ENCODE measurements at regions of chr7 and their contacts with region 1.

Region 1: GRCh38 chr7:21253740-21254687 is 173.9 kb upstream of the SP4 start:
- DNase-seq: peak in 3 of 5 donors; percentile 9 to 34 (median 23)
- ATAC-seq: peak in 2 of 4 donors; percentile 56 to 71
- H3K4me3 ChIP-seq: no peak overlapping the region
- H3K27ac ChIP-seq: no peak overlapping the region
- H3K4me1 ChIP-seq: peaks cover 0 to 3% (median 0%) of the 10 kb centered on the region in 12 donors
- H3K27me3 ChIP-seq: peaks cover 5 to 80% (median 31%) of the 10 kb centered on the region in 9 donors
- CTCF ChIP-seq: peak in 11 of 12 donors; percentile 27 to 62 (median 43)
- POLR2A ChIP-seq: no peak

Region 2: GRCh38 chr7:20778063-20778721 is 475.8 kb before region 1 on chr7:
- intact Hi-C with region 1: loop called in 7 of 10 experiments (anchors 2 to 10 kb)
- DNase-seq: no peak
- ATAC-seq: peak in 3 of 4 donors; percentile 85 to 95 (median 92)
- H3K4me3 ChIP-seq: peak overlapping the region in 9 of 12 donors; percentile 9 to 43 (median 34)
- H3K27ac ChIP-seq: no peak overlapping the region
- H3K4me1 ChIP-seq: peaks cover 0 to 11% (median 5%) of the 10 kb centered on the region in 12 donors
- H3K27me3 ChIP-seq: peaks cover 38 to 100% (median 95%) of the 10 kb centered on the region in 9 donors
- CTCF ChIP-seq: peak in 11 of 12 donors; percentile 31 to 66 (median 44)
- POLR2A ChIP-seq: no peak

Region 3: DNA sequence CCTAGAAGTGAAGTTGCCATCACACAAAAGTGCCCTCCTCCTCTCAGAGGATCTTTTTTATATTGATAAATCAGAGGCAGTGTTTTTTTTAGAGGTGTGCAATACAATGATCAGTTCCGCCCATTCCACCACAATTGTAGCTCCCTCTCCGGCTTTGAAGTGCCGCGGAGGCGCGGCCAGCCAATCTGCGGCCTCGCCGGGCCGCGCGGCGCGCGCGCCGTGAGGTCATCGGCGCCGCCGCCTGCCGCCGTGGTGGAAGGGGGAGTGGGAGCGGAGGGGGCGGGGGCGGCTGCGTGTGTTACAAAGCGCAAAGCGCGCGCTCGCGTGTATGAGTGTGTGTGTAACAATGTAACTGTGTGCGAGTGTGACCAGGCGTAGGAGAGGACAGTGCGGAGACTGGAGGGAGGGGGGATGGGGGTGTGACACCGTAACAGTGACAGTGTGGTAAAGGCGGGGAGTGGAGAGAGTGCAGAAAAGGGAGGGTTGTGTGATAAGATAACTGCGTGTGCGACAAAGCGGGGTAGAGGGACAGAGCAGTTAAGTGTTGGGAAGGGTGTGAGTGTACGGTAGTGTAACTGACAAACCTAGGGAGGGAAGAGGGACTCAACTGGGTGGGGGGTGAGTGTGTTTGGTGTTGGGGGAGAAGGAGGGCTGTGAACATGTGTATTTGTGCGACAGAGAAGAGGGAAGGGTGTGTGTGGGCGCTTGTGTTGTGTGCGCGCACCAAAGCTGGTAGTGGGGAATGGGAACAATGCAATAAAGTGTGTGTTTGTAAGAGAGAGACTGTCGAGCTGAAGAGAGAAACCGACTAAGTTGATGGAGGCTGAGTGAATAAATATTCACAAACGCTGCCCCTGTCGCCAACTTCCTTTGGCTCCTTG is 467.0 kb before region 1 on chr7 and contains the start of gene SP8:
- intact Hi-C with region 1: loop called in 1 of 10 experiments (anchors 10 kb)
- DNase-seq: no peak
- ATAC-seq: peak in 1 of 4 donors; percentile 34
- H3K4me3 ChIP-seq: peak within 1 kb of the TSS in 11 of 12 donors; percentile 5 to 45 (median 29)
- H3K27ac ChIP-seq: no peak within 1 kb of the TSS
- H3K4me1 ChIP-seq: peaks cover 0 to 48% (median 18%) of the 10 kb centered on the region in 12 donors
- H3K27me3 ChIP-seq: peaks cover 61 to 100% (median 95%) of the 10 kb centered on the region in 9 donors
- CTCF ChIP-seq: no peak
- POLR2A ChIP-seq: no peak
- total RNA-seq, gene SP8: not detected

Region 4: GRCh38 chr7:21160401-21160800 is 93.6 kb before region 1 on chr7:
- intact Hi-C with region 1: no loop called
- DNase-seq: no peak
- ATAC-seq: no peak
- H3K4me3 ChIP-seq: no peak overlapping the region
- H3K27ac ChIP-seq: no peak overlapping the region
- H3K4me1 ChIP-seq: no peaks in the 10 kb centered on the region
- H3K27me3 ChIP-seq: peaks cover 0 to 6% (median 0%) of the 10 kb centered on the region in 9 donors
- CTCF ChIP-seq: no peak
- POLR2A ChIP-seq: no peak

Region 5: DNA sequence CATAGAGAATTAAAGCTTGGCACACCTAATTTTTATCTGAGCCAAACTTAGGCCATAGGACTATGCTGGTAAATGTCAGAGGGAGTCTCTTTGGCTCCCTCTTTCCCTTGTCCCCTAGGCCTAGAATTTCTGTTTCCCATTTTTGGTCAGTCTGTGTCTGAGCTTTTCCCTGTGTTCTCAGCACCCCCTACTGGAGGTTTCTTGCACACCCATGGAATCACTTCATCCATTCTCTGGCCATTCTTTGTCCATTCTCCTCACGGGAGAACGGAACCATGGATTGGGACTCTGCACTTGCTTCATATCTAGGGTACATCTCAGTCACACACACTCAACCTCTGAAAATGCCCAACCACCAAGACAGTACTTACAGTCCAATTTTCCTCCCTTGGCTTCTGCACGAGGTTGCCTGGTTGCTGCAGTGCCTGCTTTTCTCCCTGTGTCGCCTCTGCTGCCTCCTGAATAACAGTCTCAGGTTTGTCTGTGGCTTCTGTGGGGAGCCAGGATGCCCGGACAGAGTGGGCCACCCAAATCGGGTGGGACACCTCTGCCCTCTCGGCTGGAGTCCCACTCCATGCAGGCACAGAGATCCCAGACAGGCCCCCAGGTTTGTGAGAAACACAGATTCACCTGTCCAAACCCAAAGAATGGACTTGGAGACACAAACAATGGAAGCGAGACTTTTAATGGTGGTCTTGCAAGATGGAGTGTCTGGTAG is 253.8 kb after region 1 on chr7:
- intact Hi-C with region 1: loop called in 4 of 10 experiments (anchors 2 to 5 kb)
- DNase-seq: peak in 3 of 5 donors; percentile 9 to 33 (median 21)
- ATAC-seq: peak; percentile 47 to 72 (median 66)
- H3K4me3 ChIP-seq: no peak overlapping the region
- H3K27ac ChIP-seq: no peak overlapping the region
- H3K4me1 ChIP-seq: no peaks in the 10 kb centered on the region
- H3K27me3 ChIP-seq: no peaks in the 10 kb centered on the region
- CTCF ChIP-seq: peak; percentile 54 to 80 (median 66)
- POLR2A ChIP-seq: no peak

Region 6: GRCh38 chr7:21671859-21672258 is 417.8 kb after region 1 on chr7:
- intact Hi-C with region 1: no loop called
- DNase-seq: no peak
- ATAC-seq: no peak
- H3K4me3 ChIP-seq: no peak overlapping the region
- H3K27ac ChIP-seq: no peak overlapping the region
- H3K4me1 ChIP-seq: no peaks in the 10 kb centered on the region
- H3K27me3 ChIP-seq: no peaks in the 10 kb centered on the region
- CTCF ChIP-seq: no peak
- POLR2A ChIP-seq: no peak

Region 7: DNA sequence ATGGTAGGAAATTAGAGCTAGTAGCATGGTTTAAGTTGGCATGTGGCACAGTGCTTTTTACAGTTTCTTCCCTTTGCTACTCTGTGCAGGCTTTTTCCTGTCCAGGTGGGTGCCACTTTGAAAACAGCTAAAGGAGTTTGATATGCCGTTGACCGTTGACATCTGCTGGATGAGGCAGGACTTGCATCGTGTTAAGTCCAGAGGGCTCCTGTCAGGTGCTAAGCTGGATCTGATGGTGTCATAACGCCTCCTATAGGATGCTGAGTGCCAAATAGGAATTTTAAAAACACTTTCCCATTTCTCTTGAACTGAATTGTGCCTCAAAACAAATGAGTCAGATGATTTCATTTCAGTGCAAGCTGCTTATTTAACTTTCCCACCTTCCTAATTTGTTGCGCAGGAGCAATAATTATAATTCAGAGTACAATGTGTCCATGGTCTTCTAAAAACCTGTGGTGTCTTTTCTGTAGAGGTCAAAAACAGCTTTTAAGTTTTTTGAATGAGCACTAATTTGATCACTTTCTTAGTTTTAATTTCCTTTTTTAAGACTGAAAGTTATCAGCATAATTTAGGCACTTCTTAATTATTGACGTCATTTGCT is 513.4 kb after region 1 on chr7:
- intact Hi-C with region 1: loop called in 5 of 10 experiments (anchors 2 to 10 kb)
- DNase-seq: peak in 4 of 5 donors; percentile 15 to 47 (median 32)
- ATAC-seq: peak; percentile 66 to 94 (median 90)
- H3K4me3 ChIP-seq: no peak overlapping the region
- H3K27ac ChIP-seq: no peak overlapping the region
- H3K4me1 ChIP-seq: peaks cover 0 to 17% (median 2%) of the 10 kb centered on the region in 12 donors
- H3K27me3 ChIP-seq: peaks cover 0 to 5% (median 0%) of the 10 kb centered on the region in 9 donors
- CTCF ChIP-seq: peak in 10 of 12 donors; percentile 31 to 62 (median 47)
- POLR2A ChIP-seq: no peak

Region 8: DNA sequence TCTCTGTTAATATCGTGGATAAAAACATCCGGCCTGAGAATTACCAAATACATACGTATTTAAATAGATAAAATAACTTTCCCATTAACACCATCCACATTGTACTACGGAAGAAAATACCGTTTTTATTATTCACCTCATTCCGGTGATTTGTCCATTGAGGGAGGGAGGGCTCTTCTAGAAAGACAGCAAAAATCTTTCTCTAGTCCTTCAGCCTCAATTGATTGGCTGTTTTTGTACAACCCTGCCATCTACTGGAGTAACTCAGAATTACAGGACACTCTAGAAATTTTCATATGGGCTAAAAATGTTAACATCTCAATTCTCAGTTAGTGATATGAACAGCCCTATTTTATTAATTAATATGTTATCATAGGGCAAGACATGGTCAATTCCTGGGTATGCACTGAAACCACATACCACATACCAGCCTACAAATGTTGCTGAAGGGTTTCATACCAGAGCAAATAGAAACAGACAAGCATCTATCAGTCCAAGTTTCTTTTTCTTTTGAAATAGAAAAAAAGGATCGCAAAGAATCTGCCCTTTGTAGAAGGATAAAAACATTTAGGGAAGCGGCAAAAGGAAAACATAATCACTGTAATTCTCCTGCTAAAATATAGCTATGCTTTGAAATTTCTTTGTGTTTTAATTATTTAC is 747.5 kb after region 1 on chr7:
- intact Hi-C with region 1: loop called in 5 of 10 experiments (anchors 5 to 10 kb)
- DNase-seq: no peak
- ATAC-seq: peak in 3 of 4 donors; percentile 44 to 59 (median 47)
- H3K4me3 ChIP-seq: peak overlapping the region in 2 of 12 donors; percentile 1 to 20
- H3K27ac ChIP-seq: no peak overlapping the region
- H3K4me1 ChIP-seq: peaks cover 0 to 3% (median 0%) of the 10 kb centered on the region in 12 donors
- H3K27me3 ChIP-seq: peaks cover 0 to 8% (median 0%) of the 10 kb centered on the region in 9 donors
- CTCF ChIP-seq: peak; percentile 67 to 87 (median 79)
- POLR2A ChIP-seq: no peak

Region 9: DNA sequence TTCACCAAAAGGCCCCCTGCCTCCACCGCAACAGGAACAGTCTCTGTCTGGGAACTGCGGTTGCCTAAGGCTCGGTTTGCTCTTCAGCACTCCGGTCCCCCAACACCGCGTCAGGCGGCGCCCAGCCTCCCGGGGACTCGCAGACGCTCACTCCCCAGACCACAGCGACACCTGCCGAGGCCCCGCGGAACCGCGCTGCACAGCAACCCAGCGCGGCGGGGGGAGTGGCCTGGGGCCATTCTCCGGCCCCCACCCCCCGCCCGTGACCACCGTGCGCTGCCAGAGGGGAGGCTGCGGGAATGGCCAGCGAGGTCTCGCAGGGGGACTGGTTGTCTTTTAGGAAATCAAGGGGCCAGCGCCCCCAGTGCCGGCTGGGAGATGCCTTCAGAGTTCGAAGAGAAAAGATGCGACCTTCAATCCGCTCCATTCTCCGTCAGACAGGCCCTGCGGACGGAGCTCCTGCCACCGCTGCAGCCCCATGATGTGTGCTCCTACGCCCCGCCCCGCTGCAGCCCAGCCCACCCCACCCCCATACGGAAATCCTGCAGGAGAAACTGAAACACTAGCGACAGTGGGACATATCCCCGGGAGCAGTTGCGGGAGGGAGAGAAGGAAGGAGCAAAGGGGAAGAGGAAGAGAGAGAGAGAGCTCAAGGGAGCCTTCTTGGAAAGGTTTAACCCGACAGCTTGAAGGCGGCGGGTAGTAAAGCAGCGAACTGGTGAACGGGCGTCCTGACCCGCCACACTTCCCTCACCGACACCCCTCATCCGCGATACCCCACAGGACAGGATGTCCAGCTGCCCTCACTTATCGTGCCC is 829.1 kb after region 1 on chr7:
- intact Hi-C with region 1: loop called in 1 of 10 experiments (anchors 5 kb)
- DNase-seq: peak; percentile 87 to 94 (median 90)
- ATAC-seq: peak; percentile 89 to 99 (median 98)
- H3K4me3 ChIP-seq: peak overlapping the region; percentile 41 to 81 (median 66)
- H3K27ac ChIP-seq: peak overlapping the region; percentile 15 to 87 (median 80)
- H3K4me1 ChIP-seq: peaks cover 0 to 17% (median 7%) of the 10 kb centered on the region in 12 donors
- H3K27me3 ChIP-seq: peaks cover 0 to 24% (median 0%) of the 10 kb centered on the region in 9 donors
- CTCF ChIP-seq: peak; percentile 94 to 99 (median 98)
- POLR2A ChIP-seq: no peak

Measured in heart left ventricle (tissue), 16 donors.